Naive thymus-derived CD4-positive, alpha-beta T cell (primary cell): ENCODE measurements at regions of chr16 and their contacts with region 1.

Region 1: GRCh38 chr16:67279296-67280089 is at the start of gene PLEKHG4:
- DNase-seq: peak in 8 of 9 donors; percentile 61 to 79 (median 73)
- ATAC-seq: peak; percentile 98
- H3K4me3 ChIP-seq: peak within 1 kb of the TSS; percentile 70
- H3K4me3 Mint-ChIP-seq: peak within 1 kb of the TSS; percentile 74 to 90 (median 83)
- H3K27ac ChIP-seq: peak within 1 kb of the TSS; percentile 72
- H3K27ac Mint-ChIP-seq: peak within 1 kb of the TSS; percentile 62 to 93 (median 78)
- H3K4me1 ChIP-seq: peaks cover 9 to 27% of the 10 kb centered on the region in 2 donors
- H3K4me1 Mint-ChIP-seq: peaks cover 6 to 26% (median 21%) of the 10 kb centered on the region in 7 donors
- H3K27me3 ChIP-seq: no peaks in the 10 kb centered on the region
- H3K27me3 Mint-ChIP-seq: no peaks in the 10 kb centered on the region
- total RNA-seq, gene PLEKHG4: 18.9 to 32.3 (median 26.1) TPM

Region 2: DNA sequence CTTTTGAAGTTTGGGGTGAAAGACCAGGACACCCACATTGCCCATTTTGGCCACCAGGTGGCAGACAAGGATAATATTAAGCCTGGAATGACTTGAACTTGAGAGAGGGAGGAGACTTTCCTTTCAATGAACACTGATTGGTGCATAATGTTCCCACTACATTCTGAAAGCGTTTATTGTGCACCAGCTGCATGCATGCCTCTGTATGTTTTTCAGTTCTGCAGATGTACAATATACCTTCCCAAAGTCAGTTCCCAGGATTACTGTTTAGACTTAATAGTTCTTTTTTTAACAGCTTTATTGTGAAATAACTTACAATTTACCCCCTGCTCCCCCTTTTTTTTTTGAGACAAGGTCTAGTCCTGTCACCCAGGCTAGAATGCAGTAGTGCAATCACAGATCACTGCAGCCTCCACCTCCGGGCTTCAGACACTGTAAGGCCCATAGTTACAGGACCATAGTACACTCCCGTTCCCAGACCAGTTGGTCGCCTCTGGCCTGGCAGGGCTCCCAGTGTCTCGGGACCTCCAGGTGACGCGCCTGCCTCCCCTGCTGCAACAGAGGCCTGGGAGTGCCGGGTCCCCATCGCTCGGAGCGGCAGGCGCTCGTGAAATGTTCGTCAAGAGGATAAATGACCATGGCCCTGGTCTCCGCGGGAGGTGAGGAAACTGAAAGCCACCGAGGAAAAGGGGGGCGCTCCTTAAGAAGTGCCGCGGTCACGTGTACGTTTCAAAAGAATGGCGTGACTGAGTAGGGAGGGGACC is 332.0 kb before region 1 on chr16:
- CTCF ChIA-PET with region 1: no interaction called
- POLR2A ChIA-PET with region 1: no interaction called
- intact Hi-C with region 1: loop called in 1 of 2 experiments (anchors 5 kb)
- DNase-seq: peak; percentile 64 to 86 (median 80)
- ATAC-seq: peak; percentile 97
- H3K4me3 ChIP-seq: peak overlapping the region; percentile 45
- H3K4me3 Mint-ChIP-seq: peak overlapping the region; percentile 83 to 95 (median 92)
- H3K27ac ChIP-seq: peak overlapping the region; percentile 26
- H3K27ac Mint-ChIP-seq: peak overlapping the region in 3 of 9 donors; percentile 13 to 50 (median 29)
- H3K4me1 ChIP-seq: peaks cover 0 to 4% of the 10 kb centered on the region in 2 donors
- H3K4me1 Mint-ChIP-seq: peaks cover 13 to 24% (median 18%) of the 10 kb centered on the region in 7 donors
- H3K27me3 ChIP-seq: no peaks in the 10 kb centered on the region
- H3K27me3 Mint-ChIP-seq: peaks cover 23 to 39% (median 32%) of the 10 kb centered on the region in 5 donors

Region 3: GRCh38 chr16:67084345-67085028 is 195.0 kb before region 1 on chr16:
- CTCF ChIA-PET with region 1: no interaction called
- POLR2A ChIA-PET with region 1: no interaction called
- intact Hi-C with region 1: no loop called
- DNase-seq: no peak
- ATAC-seq: no peak
- H3K4me3 ChIP-seq: no peak overlapping the region
- H3K4me3 Mint-ChIP-seq: no peak overlapping the region
- H3K27ac ChIP-seq: no peak overlapping the region
- H3K27ac Mint-ChIP-seq: no peak overlapping the region
- H3K4me1 ChIP-seq: no peaks in the 10 kb centered on the region
- H3K4me1 Mint-ChIP-seq: peaks cover 4 to 20% (median 10%) of the 10 kb centered on the region in 7 donors
- H3K27me3 ChIP-seq: no peaks in the 10 kb centered on the region
- H3K27me3 Mint-ChIP-seq: no peaks in the 10 kb centered on the region

Region 4: DNA sequence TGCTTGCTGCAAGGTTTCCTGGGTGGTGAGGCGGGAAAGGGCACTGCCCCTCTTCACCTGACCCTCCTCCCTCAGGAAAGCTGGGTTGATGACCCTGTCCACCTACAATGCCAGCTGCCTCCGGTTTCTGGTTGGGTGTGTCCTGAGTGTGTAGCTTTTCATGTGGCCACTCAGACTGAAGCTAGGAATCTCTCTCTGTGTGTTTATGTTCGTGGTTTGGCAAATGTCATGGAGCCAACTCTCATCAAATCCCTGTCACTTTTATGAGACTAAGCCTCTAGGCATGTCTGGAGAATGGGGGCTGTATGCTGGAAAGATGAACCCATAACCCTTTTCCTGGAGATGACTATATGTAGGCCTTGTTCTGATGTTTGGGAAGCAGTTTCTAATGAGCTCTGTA is 16.9 kb after region 1 on chr16:
- CTCF ChIA-PET with region 1: no interaction called
- POLR2A ChIA-PET with region 1: no interaction called
- intact Hi-C with region 1: no loop called
- DNase-seq: no peak
- ATAC-seq: no peak
- H3K4me3 ChIP-seq: no peak overlapping the region
- H3K4me3 Mint-ChIP-seq: no peak overlapping the region
- H3K27ac ChIP-seq: no peak overlapping the region
- H3K27ac Mint-ChIP-seq: no peak overlapping the region
- H3K4me1 ChIP-seq: no peaks in the 10 kb centered on the region
- H3K4me1 Mint-ChIP-seq: no peaks in the 10 kb centered on the region
- H3K27me3 ChIP-seq: no peaks in the 10 kb centered on the region
- H3K27me3 Mint-ChIP-seq: peaks cover 0 to 4% (median 0%) of the 10 kb centered on the region in 5 donors

Region 5: GRCh38 chr16:67399181-67399733 is 119.8 kb after region 1 on chr16:
- CTCF ChIA-PET with region 1: no interaction called
- POLR2A ChIA-PET with region 1: no interaction called
- intact Hi-C with region 1: loop called (anchors 2 to 5 kb)
- DNase-seq: peak in 6 of 9 donors; percentile 29 to 69 (median 46)
- ATAC-seq: peak; percentile 77
- H3K4me3 ChIP-seq: no peak overlapping the region
- H3K4me3 Mint-ChIP-seq: no peak overlapping the region
- H3K27ac ChIP-seq: no peak overlapping the region
- H3K27ac Mint-ChIP-seq: no peak overlapping the region
- H3K4me1 ChIP-seq: no peaks in the 10 kb centered on the region
- H3K4me1 Mint-ChIP-seq: peaks cover under 1 to 3% (median under 1%) of the 10 kb centered on the region in 7 donors
- H3K27me3 ChIP-seq: peaks cover 0 to 1% of the 10 kb centered on the region in 2 donors
- H3K27me3 Mint-ChIP-seq: peaks cover 6 to 26% (median 19%) of the 10 kb centered on the region in 5 donors

Region 6: GRCh38 chr16:67415872-67416793 is 136.6 kb after region 1 on chr16 and contains the start of gene ZDHHC1:
- CTCF ChIA-PET with region 1: no interaction called
- POLR2A ChIA-PET with region 1: no interaction called
- intact Hi-C with region 1: loop called in 1 of 2 experiments (anchors 5 kb)
- DNase-seq: peak in 5 of 9 donors; percentile 19 to 76 (median 45)
- ATAC-seq: peak; percentile 90
- H3K4me3 ChIP-seq: peak within 1 kb of the TSS; percentile 30
- H3K4me3 Mint-ChIP-seq: peak within 1 kb of the TSS; percentile 67 to 88 (median 76)
- H3K27ac ChIP-seq: no peak within 1 kb of the TSS
- H3K27ac Mint-ChIP-seq: peak within 1 kb of the TSS in 3 of 9 donors; percentile 11 to 82 (median 63)
- H3K4me1 ChIP-seq: no peaks in the 10 kb centered on the region
- H3K4me1 Mint-ChIP-seq: peaks cover 5 to 15% (median 10%) of the 10 kb centered on the region in 7 donors
- H3K27me3 ChIP-seq: peaks cover 3 to 4% of the 10 kb centered on the region in 2 donors
- H3K27me3 Mint-ChIP-seq: peaks cover 22 to 42% (median 34%) of the 10 kb centered on the region in 5 donors
- total RNA-seq, gene ZDHHC1: 0.34 to 3.6 (median 0.48) TPM in 3 of 5 experiments, not detected in the others

Region 7: GRCh38 chr16:67461600-67462592 is 182.4 kb after region 1 on chr16:
- CTCF ChIA-PET with region 1: no interaction called
- POLR2A ChIA-PET with region 1: no interaction called
- intact Hi-C with region 1: loop called in 1 of 2 experiments (anchors 10 kb)
- DNase-seq: no peak
- ATAC-seq: no peak
- H3K4me3 ChIP-seq: no peak overlapping the region
- H3K4me3 Mint-ChIP-seq: no peak overlapping the region
- H3K27ac ChIP-seq: no peak overlapping the region
- H3K27ac Mint-ChIP-seq: no peak overlapping the region
- H3K4me1 ChIP-seq: peaks cover 0 to 7% of the 10 kb centered on the region in 2 donors
- H3K4me1 Mint-ChIP-seq: peaks cover 10 to 39% (median 24%) of the 10 kb centered on the region in 7 donors
- H3K27me3 ChIP-seq: no peaks in the 10 kb centered on the region
- H3K27me3 Mint-ChIP-seq: no peaks in the 10 kb centered on the region